PC-3 (cell line): ENCODE measurements at regions of chr10 and their contacts with region 1.

Region 1: GRCh38 chr10:92181575-92181974 is 109.3 kb downstream of the CPEB3 start:
- DNase-seq: peak; percentile 9
- ATAC-seq: no peak
- H3K4me3 ChIP-seq: no peak overlapping the region
- H3K27ac ChIP-seq: no peak overlapping the region
- H3K4me1 ChIP-seq: peaks cover 7% of the 10 kb centered on the region
- H3K27me3 ChIP-seq: no peaks in the 10 kb centered on the region
- CTCF ChIP-seq: peak; percentile 44; the same call in 1 of the 2 replicates

Region 2: DNA sequence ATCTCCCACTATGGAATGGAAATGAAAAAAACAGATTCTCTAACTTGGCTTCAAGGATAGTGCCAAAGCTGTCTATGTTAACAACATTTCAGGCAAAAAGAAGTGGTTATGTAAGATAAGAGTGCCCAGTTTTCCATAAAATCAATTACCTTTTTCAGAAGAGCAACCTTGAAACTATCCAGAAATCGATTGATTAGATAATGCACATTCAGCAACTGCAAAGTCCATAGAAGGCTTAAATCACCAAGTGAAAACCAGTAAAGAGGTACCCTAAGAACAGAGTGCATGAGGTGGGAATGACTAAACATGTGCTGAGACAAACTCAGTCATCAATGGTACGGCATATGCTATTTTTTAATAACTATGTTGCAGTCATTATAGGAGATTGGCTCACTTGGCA is 455.2 kb before region 1 on chr10:
- CTCF ChIA-PET with region 1: no interaction called
- POLR2A ChIA-PET with region 1: no interaction called
- intact Hi-C with region 1: no loop called
- DNase-seq: no peak
- ATAC-seq: no peak
- H3K4me3 ChIP-seq: no peak overlapping the region
- H3K27ac ChIP-seq: no peak overlapping the region
- H3K4me1 ChIP-seq: no peaks in the 10 kb centered on the region
- H3K27me3 ChIP-seq: no peaks in the 10 kb centered on the region; the same call in 1 of the 2 replicates
- CTCF ChIP-seq: no peak

Region 3: GRCh38 chr10:92200564-92200963 is 19.0 kb after region 1 on chr10:
- CTCF ChIA-PET with region 1: no interaction called
- POLR2A ChIA-PET with region 1: no interaction called
- intact Hi-C with region 1: no loop called
- DNase-seq: peak; percentile 53
- ATAC-seq: peak; percentile 74
- H3K4me3 ChIP-seq: no peak overlapping the region
- H3K27ac ChIP-seq: no peak overlapping the region
- H3K4me1 ChIP-seq: peaks cover 6% of the 10 kb centered on the region
- H3K27me3 ChIP-seq: no peaks in the 10 kb centered on the region
- CTCF ChIP-seq: no peak

Region 4: GRCh38 chr10:92222603-92223275 is 41.2 kb after region 1 on chr10:
- CTCF ChIA-PET with region 1: no interaction called
- POLR2A ChIA-PET with region 1: interaction called, 12 read pairs
- intact Hi-C with region 1: no loop called
- DNase-seq: peak; percentile 84
- ATAC-seq: peak; percentile 79
- H3K4me3 ChIP-seq: peak overlapping the region; percentile 44; the same call in 1 of the 2 replicates
- H3K27ac ChIP-seq: peak overlapping the region; percentile 93
- H3K4me1 ChIP-seq: peaks cover 27% of the 10 kb centered on the region
- H3K27me3 ChIP-seq: no peaks in the 10 kb centered on the region
- CTCF ChIP-seq: no peak

Region 5: GRCh38 chr10:92240289-92241157 is 58.9 kb after region 1 on chr10:
- CTCF ChIA-PET with region 1: no interaction called
- POLR2A ChIA-PET with region 1: no interaction called
- intact Hi-C with region 1: no loop called
- DNase-seq: peak; percentile 59
- ATAC-seq: peak; percentile 39
- H3K4me3 ChIP-seq: peak overlapping the region; percentile 75
- H3K27ac ChIP-seq: 0 out of 2 replicates have a peak overlapping the region, but pooled peaks have one; percentile 4
- H3K4me1 ChIP-seq: peaks cover 45% of the 10 kb centered on the region
- H3K27me3 ChIP-seq: no peaks in the 10 kb centered on the region
- CTCF ChIP-seq: no peak